ENCODE measurements at regions of chr22 and their contacts with region 1.

Region 1: DNA sequence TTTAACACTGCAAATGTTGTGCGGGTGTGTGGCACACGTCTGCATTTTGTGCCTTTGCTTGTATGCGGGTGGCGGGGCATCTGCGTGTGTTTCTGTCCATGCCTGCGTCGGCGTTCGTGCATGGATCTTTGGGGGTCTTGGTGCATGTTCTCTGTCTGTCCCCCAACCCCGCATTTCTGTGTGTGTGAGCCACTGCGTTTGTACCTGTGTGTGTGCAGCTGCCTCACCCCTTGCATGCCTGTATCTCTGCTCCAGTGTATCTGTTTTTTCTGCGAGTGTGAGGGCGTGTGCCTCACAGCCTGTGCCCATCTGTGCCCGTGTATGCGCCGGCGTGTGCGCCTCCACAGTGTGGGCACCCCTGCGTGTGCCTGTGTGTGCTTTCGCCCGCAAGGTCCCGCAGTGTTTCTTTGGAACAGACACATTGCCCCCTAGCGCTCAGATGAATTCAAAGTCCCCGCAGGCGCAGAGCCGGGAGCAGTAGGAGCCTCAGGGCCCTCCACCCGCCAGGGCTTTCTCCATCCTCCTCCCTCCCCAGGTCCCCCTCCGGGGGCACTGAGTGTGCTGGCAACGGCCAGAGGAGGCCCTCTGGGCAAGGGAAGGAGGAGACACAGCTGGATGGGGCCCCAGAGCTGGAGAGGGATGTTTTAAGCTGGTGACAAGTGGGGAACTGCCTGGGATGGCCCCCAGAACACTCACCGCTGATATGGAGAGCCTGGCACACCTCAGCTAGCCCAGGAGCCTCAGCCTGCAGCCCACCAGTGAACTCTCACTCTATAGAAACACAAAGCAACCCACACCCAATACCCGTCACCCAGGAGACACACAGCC is 3.1 kb upstream of the MN1 start:
- DNase-seq: peak in 1 of 2 donors; percentile 87
- H3K4me3 ChIP-seq: peak overlapping the region in 1 of 2 donors; percentile 21
- H3K27ac ChIP-seq: peak overlapping the region in 1 of 2 donors; percentile 92
- H3K4me1 ChIP-seq: peaks cover 11 to 34% of the 10 kb centered on the region in 2 donors
- H3K27me3 ChIP-seq: no peaks in the 10 kb centered on the region
- CTCF ChIP-seq: peak; percentile 68 to 77 (median 71)

Region 2: GRCh38 chr22:26679003-26679629 is 1125.6 kb before region 1 on chr22:
- intact Hi-C with region 1: loop called (anchors 2 kb)
- DNase-seq: peak in 1 of 2 donors; percentile 89
- H3K4me3 ChIP-seq: no peak overlapping the region
- H3K27ac ChIP-seq: no peak overlapping the region
- H3K4me1 ChIP-seq: peaks cover 5 to 15% of the 10 kb centered on the region in 2 donors
- H3K27me3 ChIP-seq: no peaks in the 10 kb centered on the region
- CTCF ChIP-seq: peak; percentile 78 to 98 (median 95)

Region 3: GRCh38 chr22:26894766-26895485 is 909.8 kb before region 1 on chr22:
- intact Hi-C with region 1: loop called (anchors 10 kb)
- DNase-seq: peak in 1 of 2 donors; percentile 76
- H3K4me3 ChIP-seq: no peak overlapping the region
- H3K27ac ChIP-seq: peak overlapping the region; percentile 84 to 87
- H3K4me1 ChIP-seq: peaks cover 22 to 46% of the 10 kb centered on the region in 2 donors
- H3K27me3 ChIP-seq: no peaks in the 10 kb centered on the region
- CTCF ChIP-seq: no peak

Region 4: GRCh38 chr22:27212617-27213177 is 592.0 kb before region 1 on chr22:
- intact Hi-C with region 1: loop called (anchors 10 kb)
- DNase-seq: peak; percentile 72 to 93
- H3K4me3 ChIP-seq: no peak overlapping the region
- H3K27ac ChIP-seq: peak overlapping the region; percentile 72 to 84
- H3K4me1 ChIP-seq: peaks cover 11 to 30% of the 10 kb centered on the region in 2 donors
- H3K27me3 ChIP-seq: no peaks in the 10 kb centered on the region
- CTCF ChIP-seq: no peak

Region 5: DNA sequence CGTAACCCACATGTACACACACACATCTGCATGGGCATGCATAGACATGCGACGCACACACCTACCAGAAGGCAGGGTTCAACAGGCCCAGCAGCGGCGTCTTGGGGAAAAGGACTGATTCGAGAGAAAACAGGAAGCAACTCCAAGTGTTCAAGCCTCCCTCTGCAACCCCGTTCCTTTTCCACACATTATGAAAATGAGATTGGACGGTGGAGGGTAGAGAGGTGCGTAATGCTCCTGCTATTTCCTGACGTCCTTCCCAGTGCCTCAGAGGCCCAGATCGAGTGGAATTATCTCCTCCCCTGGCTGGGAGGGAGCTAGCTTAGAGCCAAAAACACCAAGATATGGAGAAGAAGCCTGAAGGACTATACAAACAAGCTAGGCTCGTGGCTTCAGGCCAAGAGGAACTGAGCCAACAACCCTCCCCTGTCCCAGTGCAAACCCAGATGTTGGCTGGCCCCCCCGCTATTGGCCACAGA is 292.4 kb before region 1 on chr22:
- intact Hi-C with region 1: loop called (anchors 5 kb)
- DNase-seq: peak in 1 of 2 donors; percentile 94
- H3K4me3 ChIP-seq: no peak overlapping the region
- H3K27ac ChIP-seq: peak overlapping the region; percentile 58 to 80
- H3K4me1 ChIP-seq: peaks cover 6 to 31% of the 10 kb centered on the region in 2 donors
- H3K27me3 ChIP-seq: no peaks in the 10 kb centered on the region
- CTCF ChIP-seq: no peak

Region 6: DNA sequence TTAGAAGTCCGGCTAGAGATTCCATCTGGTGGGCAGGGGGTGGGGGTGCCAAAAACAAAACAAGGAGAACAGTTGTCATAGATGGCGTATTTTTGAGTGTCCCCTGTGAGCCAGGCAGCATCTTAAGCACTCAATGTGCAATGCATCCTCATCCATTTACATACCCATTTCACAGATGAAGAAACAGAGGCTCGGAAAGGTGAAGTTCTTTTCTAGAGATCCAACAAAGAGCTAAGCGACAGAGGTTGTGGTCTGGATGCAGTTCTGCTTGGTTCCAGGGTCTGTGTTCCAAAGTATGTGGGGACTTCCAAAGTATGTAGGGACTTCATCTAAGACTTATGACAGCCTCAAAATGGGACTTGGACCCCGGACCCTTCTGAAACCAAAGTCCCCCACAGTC is 281.0 kb before region 1 on chr22:
- intact Hi-C with region 1: no loop called
- DNase-seq: no peak
- H3K4me3 ChIP-seq: no peak overlapping the region
- H3K27ac ChIP-seq: no peak overlapping the region
- H3K4me1 ChIP-seq: peaks cover 0 to 3% of the 10 kb centered on the region in 2 donors
- H3K27me3 ChIP-seq: no peaks in the 10 kb centered on the region
- CTCF ChIP-seq: no peak

Region 7: DNA sequence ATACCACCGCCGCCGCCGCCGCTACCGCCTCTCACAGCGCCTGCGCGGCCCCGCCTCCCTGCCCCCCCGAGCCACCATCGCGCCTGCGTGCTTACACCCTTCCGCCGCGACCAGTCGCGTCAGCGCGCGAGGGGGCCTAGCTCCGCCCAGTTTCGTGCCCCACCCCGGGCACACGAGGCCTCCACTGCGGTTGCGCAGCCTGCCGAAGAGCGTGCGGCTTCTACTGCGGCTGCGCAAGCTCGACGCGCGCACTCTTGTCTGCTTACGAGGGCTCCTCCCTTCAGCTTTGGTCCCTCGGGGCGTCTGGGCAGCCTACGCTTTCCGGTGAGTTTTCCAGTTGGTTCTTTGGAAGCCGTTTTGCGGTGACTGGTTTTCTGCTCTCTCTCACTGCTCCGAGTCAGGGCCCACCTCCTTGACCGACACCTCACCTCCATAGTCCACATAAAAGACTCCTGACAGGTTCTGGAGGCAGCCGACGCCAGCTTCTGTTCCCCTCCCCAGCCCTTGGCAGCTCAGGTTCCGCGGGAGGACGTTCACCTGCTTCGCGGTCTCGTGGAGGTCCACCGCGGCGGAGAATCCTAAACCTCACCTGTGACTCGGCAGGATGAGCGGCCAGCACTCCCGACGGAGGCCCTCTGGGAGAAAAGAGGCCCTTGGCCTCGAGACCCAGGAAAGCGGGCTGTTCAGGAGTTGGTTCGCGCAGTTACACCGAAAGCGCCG is 114.7 kb after region 1 on chr22 and contains the start of gene PITPNB:
- intact Hi-C with region 1: no loop called
- DNase-seq: peak; percentile 85 to 98
- H3K4me3 ChIP-seq: peak within 1 kb of the TSS; percentile 94 to 98
- H3K27ac ChIP-seq: peak within 1 kb of the TSS; percentile 97 to 100
- H3K4me1 ChIP-seq: peaks cover 8 to 39% of the 10 kb centered on the region in 2 donors
- H3K27me3 ChIP-seq: no peaks in the 10 kb centered on the region
- CTCF ChIP-seq: no peak
- total RNA-seq, gene PITPNB: 42.1 TPM